ENCODE measurements at regions of chr19 and their contacts with region 1.

Region 1: GRCh38 chr19:11137542-11138384 is 17.8 kb downstream of the SPC24 start:
- DNase-seq: peak; percentile 82 to 94
- H3K4me3 ChIP-seq: peak overlapping the region; percentile 5
- H3K4me1 ChIP-seq: peaks cover 22% of the 10 kb centered on the region
- H3K27me3 ChIP-seq: no peaks in the 10 kb centered on the region

Region 2: GRCh38 chr19:11203194-11204075 is 65.7 kb after region 1 on chr19:
- in situ Hi-C with region 1: loop called (anchors 5 kb)
- DNase-seq: peak; percentile 32 to 79
- H3K4me3 ChIP-seq: no peak overlapping the region
- H3K4me1 ChIP-seq: no peaks in the 10 kb centered on the region
- H3K27me3 ChIP-seq: no peaks in the 10 kb centered on the region

Region 3: DNA sequence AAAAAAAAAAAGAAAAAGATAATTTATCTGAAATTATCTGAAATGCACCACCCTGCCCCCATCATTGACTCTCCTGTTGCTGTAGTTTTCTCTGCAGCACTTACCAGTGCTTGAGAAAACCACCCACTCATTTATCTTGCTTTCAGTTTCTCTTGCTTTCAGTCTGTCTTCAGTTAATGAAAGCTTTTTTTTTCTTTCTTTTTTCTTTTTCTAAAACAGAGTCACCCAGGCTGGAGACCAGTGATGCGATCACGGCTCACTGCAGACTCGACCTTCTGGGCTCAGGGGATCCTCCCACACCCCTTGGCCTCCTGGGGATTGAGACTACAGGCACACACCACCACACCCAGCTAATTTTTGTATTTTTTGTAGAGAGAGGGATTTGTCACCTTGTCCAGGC is 444.0 kb after region 1 on chr19:
- in situ Hi-C with region 1: no loop called
- DNase-seq: no peak
- H3K4me3 ChIP-seq: no peak overlapping the region
- H3K4me1 ChIP-seq: no peaks in the 10 kb centered on the region
- H3K27me3 ChIP-seq: no peaks in the 10 kb centered on the region